ENCODE measurements at regions of chr7 and their contacts with region 1.

Region 1: GRCh38 chr7:22559829-22560489 is 60.0 kb upstream of the STEAP1B start:
- ATAC-seq: peak; percentile 46 to 85 (median 72)
- H3K4me3 ChIP-seq: no peak overlapping the region
- H3K27ac ChIP-seq: no peak overlapping the region
- H3K4me1 ChIP-seq: peaks cover 18 to 30% of the 10 kb centered on the region in 2 donors

Region 2: DNA sequence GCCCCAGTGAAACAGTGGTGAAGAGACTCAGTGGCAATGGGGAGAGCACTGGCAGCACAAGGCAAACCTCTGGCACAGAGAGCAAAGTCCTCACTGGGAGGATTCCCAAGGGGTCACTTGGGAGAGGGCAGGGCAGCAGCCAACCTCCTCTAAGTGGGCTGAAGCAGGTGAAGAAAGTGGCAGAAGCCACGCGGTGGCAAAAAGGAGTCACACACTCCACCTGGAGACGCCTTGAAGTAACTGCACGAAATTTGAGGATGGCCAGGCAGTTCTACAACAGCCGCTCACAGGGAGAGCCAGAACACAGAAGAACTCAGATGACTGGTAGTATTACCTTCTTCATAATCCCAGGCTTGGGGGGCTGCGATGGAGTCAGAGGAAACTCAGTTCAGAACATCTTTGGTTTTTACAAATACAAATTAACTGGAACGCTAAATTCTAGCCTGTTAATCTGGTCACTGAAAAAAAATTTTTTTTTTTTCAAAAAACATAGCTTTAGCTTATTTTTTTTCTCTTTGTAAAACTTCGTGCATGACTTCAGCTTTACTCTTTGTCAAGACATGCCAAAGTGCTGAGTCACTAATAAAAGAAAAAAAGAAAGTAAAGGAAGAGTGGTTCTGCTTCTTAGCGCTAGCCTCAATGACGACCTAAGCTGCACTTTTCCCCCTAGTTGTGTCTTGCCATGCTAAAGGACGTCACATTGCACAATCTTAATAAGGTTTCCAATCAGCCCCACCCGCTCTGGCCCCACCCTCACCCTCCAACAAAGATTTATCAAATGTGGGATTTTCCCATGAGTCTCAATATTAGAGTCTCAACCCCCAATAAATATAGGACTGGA is 166.6 kb after region 1 on chr7:
- in situ Hi-C with region 1: loop called in 3 of 9 experiments (anchors 10 to 25 kb)
- ATAC-seq: peak in 4 of 8 experiments; percentile 53 to 80 (median 72)
- H3K4me3 ChIP-seq: no peak overlapping the region
- H3K27ac ChIP-seq: no peak overlapping the region
- H3K4me1 ChIP-seq: peaks cover 0 to 2% of the 10 kb centered on the region in 2 donors

Region 3: DNA sequence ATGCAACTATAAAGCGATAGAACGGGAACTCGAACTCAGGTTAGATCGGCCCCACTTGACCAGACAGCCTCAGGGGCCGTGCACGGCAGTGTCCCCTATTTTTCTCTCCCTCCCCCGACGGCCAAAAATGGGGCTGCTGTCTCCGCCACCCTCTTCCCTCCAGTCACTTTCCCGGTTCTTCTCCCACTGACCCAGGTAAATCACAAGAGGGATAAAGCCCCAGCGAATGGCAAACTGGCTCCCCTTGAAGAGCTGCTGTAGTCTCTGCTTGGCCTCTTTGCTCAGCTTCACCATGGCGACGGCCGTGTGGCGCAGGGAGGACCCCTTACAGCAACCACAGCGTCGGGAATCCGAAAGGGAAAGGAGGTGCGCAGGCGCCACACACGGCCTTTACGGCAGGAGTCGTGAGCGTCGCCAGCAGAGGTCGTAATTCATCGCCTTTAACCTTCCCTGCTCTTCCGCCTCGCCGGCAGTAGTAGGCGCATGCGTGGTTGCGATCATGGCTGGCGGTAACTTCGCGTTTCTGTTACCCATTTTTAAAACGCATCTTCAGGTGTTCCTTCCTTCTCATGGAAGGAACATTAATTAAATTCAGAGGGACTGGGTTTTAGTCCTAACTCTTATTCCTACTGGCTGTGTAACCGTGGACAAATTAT is 262.7 kb after region 1 on chr7 and contains the start of gene TOMM7:
- in situ Hi-C with region 1: loop called in 1 of 9 experiments (anchors 25 kb)
- ATAC-seq: peak; percentile 88 to 99 (median 97)
- H3K4me3 ChIP-seq: peak within 1 kb of the TSS; percentile 66 to 87 (median 75)
- H3K27ac ChIP-seq: peak within 1 kb of the TSS; percentile 74 to 85
- H3K4me1 ChIP-seq: peaks cover 14 to 17% of the 10 kb centered on the region in 2 donors
- total RNA-seq, gene TOMM7: 153 to 386 (median 246) TPM

Measured in motor neuron (in vitro differentiated cells).